ENCODE measurements at regions of chr17 and their contacts with region 1.

Region 1: GRCh38 chr17:4215882-4216570 is 47.8 kb downstream of the ANKFY1 start:
- DNase-seq: no peak
- H3K4me3 ChIP-seq: no peak overlapping the region
- H3K27ac ChIP-seq: no peak overlapping the region
- H3K4me1 ChIP-seq: peaks cover 3% of the 10 kb centered on the region
- H3K27me3 ChIP-seq: no peaks in the 10 kb centered on the region
- CTCF ChIP-seq: no peak
- EP300 ChIP-seq: no peak
- POLR2A ChIP-seq: no peak

Region 2: GRCh38 chr17:4100883-4101756 is 114.9 kb before region 1 on chr17:
- intact Hi-C with region 1: no loop called
- DNase-seq: no peak
- H3K4me3 ChIP-seq: no peak overlapping the region
- H3K27ac ChIP-seq: no peak overlapping the region
- H3K4me1 ChIP-seq: no peaks in the 10 kb centered on the region
- H3K27me3 ChIP-seq: no peaks in the 10 kb centered on the region
- CTCF ChIP-seq: no peak
- EP300 ChIP-seq: no peak
- POLR2A ChIP-seq: no peak

Region 3: DNA sequence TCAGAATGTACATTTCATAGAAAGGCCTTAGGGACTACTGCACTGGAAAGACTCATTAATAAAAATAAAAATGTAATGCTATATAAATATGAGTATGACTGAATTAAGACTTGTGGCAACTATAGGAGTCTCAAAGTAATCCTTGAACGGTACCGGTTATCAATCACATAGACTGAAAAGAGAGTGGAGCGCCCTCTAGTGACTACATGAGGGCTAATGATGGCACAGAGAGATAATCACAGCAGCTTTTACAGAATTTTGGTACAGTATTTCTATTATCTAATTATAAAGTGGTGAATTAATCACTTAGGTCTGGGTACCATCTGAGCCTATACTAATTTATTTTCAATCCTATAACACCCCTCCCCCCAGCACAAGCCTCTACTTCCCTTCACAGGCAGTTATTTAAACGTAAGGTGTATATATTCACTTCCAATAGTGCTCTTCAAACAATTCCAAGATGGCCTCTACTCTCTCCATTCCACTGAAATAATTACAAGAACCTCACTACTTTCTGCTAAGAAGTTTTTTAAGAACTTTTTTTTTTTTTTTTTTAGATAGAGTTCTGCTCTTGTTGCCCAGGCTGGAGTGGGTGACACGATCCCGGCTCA is 88.5 kb after region 1 on chr17:
- intact Hi-C with region 1: loop called in 1 of 4 experiments (anchors 5 kb)
- DNase-seq: peak in 1 of 5 donors; percentile 43
- H3K4me3 ChIP-seq: no peak overlapping the region
- H3K27ac ChIP-seq: no peak overlapping the region
- H3K4me1 ChIP-seq: peaks cover 2% of the 10 kb centered on the region
- H3K27me3 ChIP-seq: no peaks in the 10 kb centered on the region
- CTCF ChIP-seq: peak; percentile 31 to 55 (median 52)
- EP300 ChIP-seq: no peak
- POLR2A ChIP-seq: no peak

Region 4: DNA sequence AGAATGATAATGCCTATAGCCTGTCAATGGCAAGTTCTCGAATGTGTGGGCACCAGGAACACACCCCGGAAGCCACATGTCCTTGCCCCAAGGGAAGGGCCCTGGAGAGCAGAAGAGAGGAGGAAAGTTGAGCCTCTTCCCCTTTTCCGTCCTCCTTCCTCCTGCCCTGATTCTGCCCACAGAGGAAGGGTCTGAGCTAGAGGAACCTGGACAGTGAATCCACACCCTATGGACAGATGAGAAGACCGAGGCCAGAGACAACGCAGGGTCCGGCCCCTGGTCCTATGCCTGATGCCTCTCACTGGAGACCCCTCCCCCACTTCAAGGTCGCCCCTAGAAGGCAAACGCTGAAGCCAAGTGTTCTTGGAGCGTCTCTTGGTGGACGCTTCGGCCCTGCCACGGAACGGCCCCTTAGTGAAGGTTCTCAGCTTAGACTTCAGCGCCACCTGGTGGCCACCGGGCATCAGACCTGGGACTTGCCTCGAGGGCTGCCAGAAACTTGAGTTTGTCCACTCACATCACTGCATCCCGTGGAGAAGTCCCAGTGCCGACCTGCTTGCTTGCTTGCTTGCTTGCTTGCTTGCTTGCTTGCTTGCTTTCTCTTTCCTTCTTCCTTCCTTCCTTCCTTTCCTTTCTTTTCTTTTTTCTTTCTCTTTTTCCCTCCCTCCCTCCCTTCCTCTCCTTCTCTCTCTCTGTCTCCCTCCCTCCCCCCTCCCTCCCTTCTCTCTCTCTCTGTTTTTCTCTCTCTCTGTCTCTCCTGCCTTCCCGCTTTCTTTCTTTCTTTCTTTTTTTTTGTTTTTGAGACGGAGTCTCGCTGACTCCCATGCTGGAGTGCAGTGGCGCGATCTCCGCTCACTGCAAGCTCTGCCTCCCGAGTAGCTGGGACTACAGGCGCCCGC is 197.2 kb after region 1 on chr17:
- intact Hi-C with region 1: loop called (anchors 2 to 5 kb)
- DNase-seq: peak; percentile 92 to 97 (median 95)
- H3K4me3 ChIP-seq: no peak overlapping the region
- H3K27ac ChIP-seq: no peak overlapping the region
- H3K4me1 ChIP-seq: no peaks in the 10 kb centered on the region
- H3K27me3 ChIP-seq: no peaks in the 10 kb centered on the region
- CTCF ChIP-seq: peak; percentile 85 to 96 (median 92)
- EP300 ChIP-seq: no peak
- POLR2A ChIP-seq: no peak